CD8-positive, alpha-beta memory T cell (primary cell): ENCODE measurements at regions of chr1 and their contacts with region 1.

Region 1: GRCh38 chr1:54944610-54945544 is 35.6 kb upstream of the TMEM61 start:
- DNase-seq: peak; percentile 32 to 74 (median 52)
- H3K4me3 ChIP-seq: no peak overlapping the region
- H3K4me3 Mint-ChIP-seq: peak overlapping the region in 2 of 7 donors; percentile 17 to 32
- H3K27ac ChIP-seq: no peak overlapping the region
- H3K27ac Mint-ChIP-seq: peak overlapping the region in 2 of 8 donors; percentile 67 to 70
- H3K4me1 ChIP-seq: no peaks in the 10 kb centered on the region
- H3K4me1 Mint-ChIP-seq: peaks cover 11 to 18% (median 15%) of the 10 kb centered on the region in 3 donors
- H3K27me3 ChIP-seq: no peaks in the 10 kb centered on the region
- H3K27me3 Mint-ChIP-seq: peaks cover 11 to 14% of the 10 kb centered on the region in 2 donors

Region 2: GRCh38 chr1:54959241-54959640 is 14.4 kb after region 1 on chr1:
- CTCF ChIA-PET with region 1: interaction called, 12 read pairs
- POLR2A ChIA-PET with region 1: no interaction called
- DNase-seq: no peak
- H3K4me3 ChIP-seq: no peak overlapping the region
- H3K4me3 Mint-ChIP-seq: no peak overlapping the region
- H3K27ac ChIP-seq: no peak overlapping the region
- H3K27ac Mint-ChIP-seq: no peak overlapping the region
- H3K4me1 ChIP-seq: no peaks in the 10 kb centered on the region
- H3K4me1 Mint-ChIP-seq: no peaks in the 10 kb centered on the region
- H3K27me3 ChIP-seq: no peaks in the 10 kb centered on the region
- H3K27me3 Mint-ChIP-seq: peaks cover 4 to 28% of the 10 kb centered on the region in 2 donors

Region 3: DNA sequence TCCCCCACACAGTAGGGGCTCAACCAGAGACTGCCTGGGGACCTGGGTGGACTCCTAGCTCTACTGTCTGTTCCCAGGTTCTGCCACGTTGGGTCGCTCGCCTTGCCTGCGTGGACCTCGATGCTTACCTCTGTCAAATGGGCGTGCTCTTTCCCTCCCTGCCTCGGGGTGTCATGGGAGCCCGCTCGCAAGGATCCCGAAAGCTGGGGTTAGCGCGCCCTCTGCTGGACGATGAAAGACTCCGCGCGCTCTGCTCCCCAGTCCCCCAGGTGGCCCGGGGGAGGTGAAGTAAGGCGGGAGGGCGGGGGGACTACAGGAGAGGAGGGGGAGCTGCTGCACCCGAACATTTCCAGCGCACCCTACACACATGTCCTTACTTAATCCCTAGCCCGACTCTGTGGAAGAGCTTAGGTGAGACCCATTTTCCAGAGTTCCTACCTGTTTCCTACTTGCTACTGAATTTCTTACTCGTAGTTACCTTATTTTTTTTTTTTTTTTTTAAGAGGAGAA is 51.5 kb after region 1 on chr1:
- CTCF ChIA-PET with region 1: interaction called, 111 read pairs
- POLR2A ChIA-PET with region 1: no interaction called
- DNase-seq: peak; percentile 58 to 81 (median 73)
- H3K4me3 ChIP-seq: no peak overlapping the region
- H3K4me3 Mint-ChIP-seq: peak overlapping the region; percentile 1 to 88 (median 74)
- H3K27ac ChIP-seq: no peak overlapping the region
- H3K27ac Mint-ChIP-seq: peak overlapping the region in 7 of 8 donors; percentile 37 to 98 (median 76)
- H3K4me1 ChIP-seq: peaks cover 21% of the 10 kb centered on the region
- H3K4me1 Mint-ChIP-seq: peaks cover 22 to 30% (median 26%) of the 10 kb centered on the region in 3 donors
- H3K27me3 ChIP-seq: peaks cover 17% of the 10 kb centered on the region
- H3K27me3 Mint-ChIP-seq: peaks cover 25 to 51% of the 10 kb centered on the region in 2 donors

Region 4: GRCh38 chr1:55021965-55022546 is 77.2 kb after region 1 on chr1:
- CTCF ChIA-PET with region 1: interaction called, 13 read pairs
- POLR2A ChIA-PET with region 1: no interaction called
- DNase-seq: peak; percentile 23 to 59 (median 48)
- H3K4me3 ChIP-seq: no peak overlapping the region
- H3K4me3 Mint-ChIP-seq: no peak overlapping the region
- H3K27ac ChIP-seq: no peak overlapping the region
- H3K27ac Mint-ChIP-seq: peak overlapping the region in 1 of 8 donors; percentile 42
- H3K4me1 ChIP-seq: no peaks in the 10 kb centered on the region
- H3K4me1 Mint-ChIP-seq: peaks cover 0 to 4% (median 3%) of the 10 kb centered on the region in 3 donors
- H3K27me3 ChIP-seq: no peaks in the 10 kb centered on the region
- H3K27me3 Mint-ChIP-seq: peaks cover 1 to 37% of the 10 kb centered on the region in 2 donors